Psoas muscle (tissue), 8 donors: ENCODE measurements at regions of chr6 and their contacts with region 1.

Region 1: DNA sequence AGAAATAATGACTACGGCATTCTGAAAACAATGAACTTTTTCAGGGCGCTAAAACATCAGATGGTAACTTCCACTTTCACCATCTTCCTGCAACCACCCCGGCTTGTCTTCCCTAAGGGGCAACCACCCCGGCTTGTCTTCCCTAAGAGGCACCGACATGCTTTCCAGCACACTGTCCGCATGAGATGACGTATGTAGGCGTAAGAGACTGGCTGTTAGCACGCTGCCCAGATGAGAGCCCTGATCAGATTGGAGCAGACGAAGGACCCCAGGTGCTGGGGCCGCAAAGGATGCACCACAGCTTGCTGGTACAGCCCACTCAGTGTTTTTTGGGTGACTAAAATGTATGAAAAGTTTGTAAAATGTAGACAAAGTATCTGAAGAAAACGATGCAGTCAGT is 29.3 kb downstream of the ASCC3 start:
- DNase-seq: peak in 1 of 2 donors; percentile 14
- ATAC-seq: no peak
- H3K4me3 ChIP-seq: no peak overlapping the region
- H3K27ac ChIP-seq: no peak overlapping the region
- H3K4me1 ChIP-seq: no peaks in the 10 kb centered on the region
- H3K27me3 ChIP-seq: no peaks in the 10 kb centered on the region
- CTCF ChIP-seq: no peak

Region 2: DNA sequence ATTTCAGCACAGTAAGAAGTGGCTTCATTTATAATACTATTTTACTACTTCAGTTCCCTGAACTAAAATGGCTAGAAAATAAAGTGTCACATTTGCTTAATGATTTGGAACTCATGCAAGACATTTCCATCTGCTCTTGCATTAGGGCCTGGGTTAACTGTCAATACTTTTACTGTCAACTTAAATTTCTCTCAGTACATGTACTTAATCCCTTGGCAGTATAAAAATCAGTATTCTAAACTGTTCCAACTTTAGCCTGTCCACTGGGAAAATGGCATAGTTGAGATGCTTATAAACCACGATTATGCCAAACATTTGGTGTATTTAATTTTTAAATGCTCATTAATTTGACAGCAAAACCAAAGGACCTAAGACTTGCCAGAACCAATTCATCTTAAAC is 125.2 kb before region 1 on chr6:
- intact Hi-C with region 1: loop called in 1 of 2 experiments (anchors 5 kb)
- DNase-seq: no peak
- ATAC-seq: no peak
- H3K4me3 ChIP-seq: no peak overlapping the region
- H3K27ac ChIP-seq: no peak overlapping the region
- H3K4me1 ChIP-seq: no peaks in the 10 kb centered on the region
- H3K27me3 ChIP-seq: no peaks in the 10 kb centered on the region
- CTCF ChIP-seq: no peak